Ascending aorta (tissue), 2 donors: ENCODE measurements at regions of chr4 and their contacts with region 1.

Region 1: GRCh38 chr4:106369456-106370060 is 980 bp upstream of the GIMD1 start:
- DNase-seq: peak in 1 of 2 donors; percentile 67
- H3K4me3 ChIP-seq: peak overlapping the region in 1 of 2 donors; percentile 14
- H3K27ac ChIP-seq: no peak overlapping the region
- H3K4me1 ChIP-seq: peaks cover 0 to 14% of the 10 kb centered on the region in 2 donors
- H3K27me3 ChIP-seq: no peaks in the 10 kb centered on the region
- CTCF ChIP-seq: peak; percentile 26 to 80 (median 62)

Region 2: GRCh38 chr4:106266201-106266600 is 103.4 kb before region 1 on chr4:
- intact Hi-C with region 1: loop called (anchors 5 kb)
- DNase-seq: no peak
- H3K4me3 ChIP-seq: no peak overlapping the region
- H3K27ac ChIP-seq: no peak overlapping the region
- H3K4me1 ChIP-seq: peaks cover 0 to 6% of the 10 kb centered on the region in 2 donors
- H3K27me3 ChIP-seq: no peaks in the 10 kb centered on the region
- CTCF ChIP-seq: peak; percentile 18 to 59 (median 58)

Region 3: GRCh38 chr4:106587558-106587957 is 218.0 kb after region 1 on chr4:
- intact Hi-C with region 1: loop called (anchors 2 kb)
- DNase-seq: no peak
- H3K4me3 ChIP-seq: no peak overlapping the region
- H3K27ac ChIP-seq: peak overlapping the region; percentile 30 to 44
- H3K4me1 ChIP-seq: peaks cover 0 to 25% of the 10 kb centered on the region in 2 donors
- H3K27me3 ChIP-seq: no peaks in the 10 kb centered on the region
- CTCF ChIP-seq: no peak

Region 4: DNA sequence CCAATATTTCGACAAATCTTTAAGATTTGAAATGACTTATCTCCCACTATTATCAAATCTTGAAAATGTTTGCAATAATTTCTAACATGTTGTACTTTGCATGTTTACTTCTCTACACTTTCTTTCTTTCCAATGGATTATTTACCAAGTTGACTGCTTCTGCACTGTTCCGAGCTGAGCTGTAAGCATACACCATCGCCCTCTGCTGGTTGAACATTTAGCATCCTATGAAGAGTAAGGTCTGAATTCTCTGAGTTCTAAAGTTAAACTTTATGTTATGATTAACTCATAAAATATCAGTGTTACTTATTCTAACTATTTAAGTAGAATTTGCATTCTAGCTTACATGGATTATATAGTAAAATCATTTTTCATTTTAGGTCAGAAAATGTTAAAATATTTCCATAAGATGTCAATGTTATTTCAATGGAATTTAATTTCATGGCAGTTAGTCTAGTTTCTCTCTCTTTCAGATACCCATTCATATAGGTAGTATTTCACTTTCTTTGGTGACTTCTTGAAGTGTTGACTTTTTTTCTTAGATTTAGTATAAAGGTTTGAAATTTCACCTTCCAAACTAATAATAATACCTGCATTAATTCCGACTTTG is 529.2 kb after region 1 on chr4:
- intact Hi-C with region 1: loop called (anchors 2 kb)
- DNase-seq: no peak
- H3K4me3 ChIP-seq: no peak overlapping the region
- H3K27ac ChIP-seq: no peak overlapping the region
- H3K4me1 ChIP-seq: no peaks in the 10 kb centered on the region
- H3K27me3 ChIP-seq: no peaks in the 10 kb centered on the region
- CTCF ChIP-seq: peak; percentile 22 to 63 (median 49)

Region 5: DNA sequence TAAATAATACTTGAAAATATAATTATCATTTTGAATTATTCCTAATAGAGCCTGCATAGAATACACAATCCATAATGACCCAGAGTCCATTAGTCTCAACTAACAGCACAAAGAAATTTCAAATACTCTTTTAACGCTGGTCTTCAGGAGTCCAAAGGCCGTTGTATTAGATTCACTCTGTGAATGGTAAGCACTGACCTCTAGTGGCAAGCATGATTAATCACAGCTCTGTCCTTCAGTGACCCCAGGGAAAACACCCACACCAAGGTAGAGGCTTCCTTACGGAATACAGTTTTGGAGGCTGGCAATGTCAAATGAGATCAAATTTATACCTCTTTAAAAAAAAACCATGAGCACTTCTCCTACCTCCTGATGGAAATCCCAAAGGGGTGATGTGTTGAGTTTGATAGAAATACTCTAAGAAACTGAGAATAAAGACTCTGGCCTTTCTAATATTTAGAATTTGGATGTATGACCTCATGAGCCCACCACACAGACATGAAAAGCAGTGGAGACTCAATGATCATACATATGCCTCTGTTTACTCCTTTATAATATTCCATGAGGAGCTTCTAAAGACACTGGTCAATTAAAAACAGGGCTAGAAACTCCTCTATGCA is 813.7 kb after region 1 on chr4:
- intact Hi-C with region 1: loop called (anchors 10 kb)
- DNase-seq: no peak
- H3K4me3 ChIP-seq: no peak overlapping the region
- H3K27ac ChIP-seq: no peak overlapping the region
- H3K4me1 ChIP-seq: no peaks in the 10 kb centered on the region
- H3K27me3 ChIP-seq: no peaks in the 10 kb centered on the region
- CTCF ChIP-seq: peak; percentile 62 to 81 (median 74)